ENCODE measurements at regions of chr4 and their contacts with region 1.

Region 1: DNA sequence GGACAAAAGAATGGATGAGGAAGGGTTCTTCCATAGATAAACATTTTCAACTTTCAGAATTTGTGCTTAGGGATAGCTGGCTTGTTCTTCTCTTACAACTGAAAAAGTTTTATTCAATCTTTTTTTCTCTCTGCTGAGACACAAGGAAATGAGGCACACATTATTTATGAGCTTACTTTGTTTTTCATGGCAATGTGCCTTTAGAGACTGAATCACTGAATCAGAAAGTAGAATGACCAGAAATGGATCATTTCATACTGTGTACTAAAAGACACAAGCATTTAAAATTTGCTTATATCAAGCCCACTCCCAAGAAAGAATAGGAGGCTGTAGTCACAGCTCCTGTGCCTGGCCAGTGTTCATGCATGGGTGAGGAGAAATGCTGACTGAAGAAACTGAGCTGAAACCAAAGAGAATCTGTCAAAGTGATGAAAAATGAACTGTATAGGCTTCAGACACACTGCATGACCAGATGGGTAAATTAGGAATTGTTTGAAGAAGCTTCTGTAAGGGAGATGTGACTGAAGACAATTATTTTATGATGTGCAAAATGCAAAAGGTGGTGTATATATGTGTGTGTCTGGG is 413.8 kb downstream of the RAPGEF2 start:
- DNase-seq: peak; percentile 75
- H3K4me3 ChIP-seq: no peak overlapping the region
- H3K27ac ChIP-seq: no peak overlapping the region
- H3K4me1 ChIP-seq: peaks cover 25% of the 10 kb centered on the region
- H3K27me3 ChIP-seq: no peaks in the 10 kb centered on the region
- CTCF ChIP-seq: no peak
- POLR2A ChIP-seq: no peak

Region 2: GRCh38 chr4:159504684-159505083 is 12.0 kb before region 1 on chr4:
- CTCF ChIA-PET with region 1: interaction called, 28 read pairs
- POLR2A ChIA-PET with region 1: interaction called, 6 read pairs
- dilution Hi-C with region 1: no loop called
- intact Hi-C with region 1: loop called (anchors 1 kb)
- DNase-seq: peak; percentile 83
- H3K4me3 ChIP-seq: peak overlapping the region in 1 of 3 experiments; percentile 42
- H3K27ac ChIP-seq: peak overlapping the region; percentile 32
- H3K4me1 ChIP-seq: peaks cover 22% of the 10 kb centered on the region
- H3K27me3 ChIP-seq: peaks cover 9 to 13% of the 10 kb centered on the region in 2 experiments
- CTCF ChIP-seq: no peak
- POLR2A ChIP-seq: no peak